B cell (primary cell): ENCODE measurements at regions of chr7 and their contacts with region 1.

Region 1: GRCh38 chr7:74289018-74289658 is at the start of gene CLIP2:
- DNase-seq: peak; percentile 85
- ATAC-seq: peak; percentile 74
- H3K4me3 ChIP-seq: peak within 1 kb of the TSS; percentile 34 to 73 (median 61)
- H3K4me3 Mint-ChIP-seq: peak within 1 kb of the TSS; percentile 96
- H3K27ac ChIP-seq: peak within 1 kb of the TSS; percentile 29 to 62
- H3K27ac Mint-ChIP-seq: peak within 1 kb of the TSS; percentile 93
- H3K4me1 ChIP-seq: peaks cover 32 to 47% of the 10 kb centered on the region in 2 donors
- H3K4me1 Mint-ChIP-seq: peaks cover 58% of the 10 kb centered on the region
- H3K27me3 ChIP-seq: no peaks in the 10 kb centered on the region
- H3K27me3 Mint-ChIP-seq: no peaks in the 10 kb centered on the region
- CTCF ChIP-seq: no peak
- total RNA-seq, gene CLIP2: 47.9 and 49.5 TPM in 2 replicates

Region 2: DNA sequence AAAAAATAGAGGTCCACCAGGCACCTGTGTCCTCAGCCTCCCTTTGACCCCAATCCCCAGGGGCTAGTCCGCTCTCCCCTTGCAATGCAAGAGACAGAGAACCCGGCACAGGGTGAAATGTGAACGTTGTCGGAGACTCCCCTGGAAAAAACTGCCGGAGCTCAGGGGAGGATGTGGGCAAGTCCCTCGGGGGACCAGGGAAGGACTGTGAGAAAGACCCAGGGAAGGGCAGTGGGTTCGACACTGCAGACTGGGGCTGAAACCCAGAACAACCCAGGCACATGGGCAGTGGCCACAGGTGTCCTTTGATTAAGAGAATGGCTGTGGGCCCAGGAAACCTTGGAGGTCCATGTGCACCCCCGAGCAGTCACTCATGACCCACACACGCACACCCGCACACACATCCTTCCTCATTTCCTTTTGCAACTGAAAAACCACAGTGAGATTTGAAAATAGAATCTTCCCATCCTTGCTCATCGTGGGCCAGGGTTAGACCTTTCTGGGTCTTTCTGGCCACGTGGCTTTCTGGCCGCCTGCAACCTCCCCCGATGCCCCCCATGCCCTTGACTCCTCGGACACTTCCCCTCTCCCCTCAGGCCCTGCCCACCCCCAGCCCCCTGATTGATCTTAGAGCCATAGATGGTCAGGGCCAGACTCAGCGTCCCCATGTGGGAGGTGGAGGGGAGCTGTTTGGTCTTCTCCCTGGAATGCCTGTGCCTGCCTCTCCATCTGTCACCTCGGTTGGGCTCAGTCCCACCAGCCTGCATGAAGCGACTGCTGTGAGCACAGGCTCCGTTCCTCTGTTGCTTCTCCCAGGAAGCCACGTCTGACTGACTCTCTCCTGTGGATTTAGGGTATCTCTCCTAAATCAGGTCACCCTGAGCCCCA is 71.4 kb before region 1 on chr7:
- CTCF ChIA-PET with region 1: no interaction called
- POLR2A ChIA-PET with region 1: no interaction called
- intact Hi-C with region 1: no loop called
- DNase-seq: peak; percentile 81
- ATAC-seq: peak; percentile 58
- H3K4me3 ChIP-seq: peak overlapping the region in 2 of 5 experiments; percentile 31 to 38
- H3K4me3 Mint-ChIP-seq: peak overlapping the region; percentile 81
- H3K27ac ChIP-seq: peak overlapping the region; percentile 64 to 70
- H3K27ac Mint-ChIP-seq: peak overlapping the region; percentile 92
- H3K4me1 ChIP-seq: peaks cover 46 to 67% of the 10 kb centered on the region in 2 donors
- H3K4me1 Mint-ChIP-seq: peaks cover 51% of the 10 kb centered on the region
- H3K27me3 ChIP-seq: no peaks in the 10 kb centered on the region
- H3K27me3 Mint-ChIP-seq: no peaks in the 10 kb centered on the region
- CTCF ChIP-seq: no peak

Region 3: DNA sequence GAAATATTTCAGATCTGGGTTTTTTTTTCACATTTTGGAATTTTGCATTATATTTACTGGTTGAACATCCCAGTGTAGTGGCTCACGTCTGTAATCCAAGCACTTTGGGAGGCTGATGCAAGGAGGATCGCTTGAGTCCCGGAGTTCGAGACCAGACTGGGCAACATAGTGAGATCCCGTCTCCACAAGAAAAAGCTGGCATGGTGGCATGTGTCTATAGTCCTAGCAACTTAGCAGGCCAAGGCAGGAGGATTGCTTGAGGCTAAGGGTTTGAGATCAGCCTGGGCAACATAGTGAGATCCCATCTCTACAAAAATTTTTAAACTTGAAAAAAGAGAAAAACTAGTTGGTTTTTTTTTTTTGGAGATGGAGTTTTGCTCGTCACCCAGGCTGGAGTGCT is 41.0 kb before region 1 on chr7:
- CTCF ChIA-PET with region 1: no interaction called
- POLR2A ChIA-PET with region 1: no interaction called
- intact Hi-C with region 1: no loop called
- DNase-seq: no peak
- ATAC-seq: no peak
- H3K4me3 ChIP-seq: no peak overlapping the region
- H3K4me3 Mint-ChIP-seq: no peak overlapping the region
- H3K27ac ChIP-seq: no peak overlapping the region
- H3K27ac Mint-ChIP-seq: peak overlapping the region; percentile 11
- H3K4me1 ChIP-seq: peaks cover 5 to 12% of the 10 kb centered on the region in 2 donors
- H3K4me1 Mint-ChIP-seq: peaks cover 14% of the 10 kb centered on the region
- H3K27me3 ChIP-seq: no peaks in the 10 kb centered on the region
- H3K27me3 Mint-ChIP-seq: no peaks in the 10 kb centered on the region
- CTCF ChIP-seq: no peak

Region 4: DNA sequence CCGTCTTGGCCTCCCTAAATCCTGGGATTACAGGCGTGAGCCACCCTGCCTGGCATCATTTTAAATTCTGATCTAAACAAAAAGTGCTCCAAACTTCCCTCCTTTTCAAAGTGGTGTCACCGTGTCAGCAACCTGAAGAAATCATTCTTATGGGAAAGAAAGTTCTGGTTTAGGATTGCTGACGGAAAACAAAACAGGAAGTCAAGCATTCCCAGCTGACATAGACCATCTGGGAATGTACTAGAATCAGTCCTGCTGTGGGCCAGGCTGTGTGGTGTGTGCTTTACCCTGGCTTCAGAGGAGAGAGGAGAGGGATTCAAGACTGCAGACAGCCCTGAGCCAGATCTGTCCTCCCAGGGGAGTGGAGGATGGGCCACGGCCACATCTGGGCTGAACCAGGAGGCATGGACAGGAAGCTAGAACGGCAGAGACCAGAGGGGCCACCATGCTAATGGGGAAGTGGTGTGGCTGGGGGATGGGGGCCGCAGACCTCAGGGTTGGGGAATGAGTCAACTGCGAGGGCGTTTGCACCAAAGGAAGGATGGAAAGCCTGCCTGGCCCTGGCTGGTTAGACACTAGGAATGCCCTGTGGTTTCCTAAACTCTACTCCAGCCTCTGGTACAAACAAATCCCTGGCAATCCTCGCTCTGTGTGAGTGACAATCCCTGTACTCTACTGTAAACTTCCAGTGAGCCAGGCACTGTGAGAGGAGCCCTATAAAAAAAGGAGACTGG is 16.7 kb before region 1 on chr7:
- CTCF ChIA-PET with region 1: interaction called, 56 read pairs
- POLR2A ChIA-PET with region 1: interaction called, 34 read pairs
- intact Hi-C with region 1: loop called (anchors 1 kb)
- DNase-seq: peak; percentile 65
- ATAC-seq: peak; percentile 70
- H3K4me3 ChIP-seq: peak overlapping the region in 2 of 5 experiments; percentile 5 to 18
- H3K4me3 Mint-ChIP-seq: peak overlapping the region; percentile 85
- H3K27ac ChIP-seq: no peak overlapping the region
- H3K27ac Mint-ChIP-seq: peak overlapping the region; percentile 87
- H3K4me1 ChIP-seq: peaks cover 16 to 44% of the 10 kb centered on the region in 2 donors
- H3K4me1 Mint-ChIP-seq: peaks cover 39% of the 10 kb centered on the region
- H3K27me3 ChIP-seq: no peaks in the 10 kb centered on the region
- H3K27me3 Mint-ChIP-seq: no peaks in the 10 kb centered on the region
- CTCF ChIP-seq: no peak